GM12878 (cell line): ENCODE measurements at regions of chr6 and their contacts with region 1.

Region 1: GRCh38 chr6:105077596-105078385 is 102.0 kb downstream of the POPDC3 start:
- DNase-seq: no peak
- ATAC-seq: peak; percentile 63
- H3K4me3 ChIP-seq: no peak overlapping the region
- H3K27ac ChIP-seq: no peak overlapping the region
- H3K4me1 ChIP-seq: no peaks in the 10 kb centered on the region
- H3K27me3 ChIP-seq: no peaks in the 10 kb centered on the region
- CTCF ChIP-seq: peak; percentile 38 to 50 (median 42); a peak in 4 of 6 replicates
- EP300 ChIP-seq: no peak
- POLR2A ChIP-seq: no peak
- RAD21 ChIP-seq: peak; percentile 70

Region 2: GRCh38 chr6:104682722-104683643 is 394.8 kb before region 1 on chr6:
- CTCF ChIA-PET with region 1: interaction called, 18 read pairs
- POLR2A ChIA-PET with region 1: no interaction called
- RAD21 ChIA-PET with region 1: interaction called, 8 read pairs
- SMC1A ChIA-PET with region 1: no interaction called
- in situ Hi-C with region 1: no loop called
- intact Hi-C with region 1: loop called (anchors 5 kb)
- DNase-seq: no peak
- ATAC-seq: peak; percentile 93
- H3K4me3 ChIP-seq: no peak overlapping the region
- H3K27ac ChIP-seq: no peak overlapping the region
- H3K4me1 ChIP-seq: no peaks in the 10 kb centered on the region
- H3K27me3 ChIP-seq: no peaks in the 10 kb centered on the region
- CTCF ChIP-seq: peak; percentile 75 to 88 (median 77)
- EP300 ChIP-seq: no peak
- POLR2A ChIP-seq: no peak
- RAD21 ChIP-seq: peak; percentile 78

Region 3: DNA sequence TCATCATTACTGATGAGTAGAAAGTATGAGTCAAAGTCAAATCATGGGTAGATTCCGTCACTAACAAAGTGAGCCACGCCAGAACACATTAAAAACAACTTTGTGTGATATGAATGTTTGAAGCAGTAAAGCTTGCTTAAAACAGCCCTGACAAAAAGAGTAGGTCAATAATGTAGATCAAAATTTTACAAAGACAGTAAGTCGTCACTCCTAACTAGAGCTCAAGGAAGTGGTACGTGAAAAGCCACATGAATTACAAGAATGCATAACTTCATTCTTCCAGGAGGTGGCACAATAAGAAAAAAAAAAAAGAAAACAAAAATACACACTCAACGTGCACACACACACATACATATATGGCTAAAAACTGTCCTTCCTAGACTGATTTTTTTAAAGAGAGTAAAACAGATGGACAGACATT is 288.0 kb before region 1 on chr6:
- CTCF ChIA-PET with region 1: interaction called, 101 read pairs
- POLR2A ChIA-PET with region 1: interaction called, 3 read pairs
- RAD21 ChIA-PET with region 1: interaction called, 54 read pairs
- SMC1A ChIA-PET with region 1: interaction called, 41 read pairs
- in situ Hi-C with region 1: loop called (anchors 5 kb)
- intact Hi-C with region 1: loop called (anchors 2 kb)
- DNase-seq: no peak
- ATAC-seq: peak; percentile 90
- H3K4me3 ChIP-seq: no peak overlapping the region
- H3K27ac ChIP-seq: no peak overlapping the region
- H3K4me1 ChIP-seq: peaks cover 3% of the 10 kb centered on the region; the same call in 1 of the 2 replicates
- H3K27me3 ChIP-seq: no peaks in the 10 kb centered on the region
- CTCF ChIP-seq: peak; percentile 30 to 46 (median 41); a peak in 4 of 6 replicates
- EP300 ChIP-seq: no peak
- POLR2A ChIP-seq: no peak
- RAD21 ChIP-seq: peak; percentile 34; the same call in 1 of the 2 replicates

Region 4: DNA sequence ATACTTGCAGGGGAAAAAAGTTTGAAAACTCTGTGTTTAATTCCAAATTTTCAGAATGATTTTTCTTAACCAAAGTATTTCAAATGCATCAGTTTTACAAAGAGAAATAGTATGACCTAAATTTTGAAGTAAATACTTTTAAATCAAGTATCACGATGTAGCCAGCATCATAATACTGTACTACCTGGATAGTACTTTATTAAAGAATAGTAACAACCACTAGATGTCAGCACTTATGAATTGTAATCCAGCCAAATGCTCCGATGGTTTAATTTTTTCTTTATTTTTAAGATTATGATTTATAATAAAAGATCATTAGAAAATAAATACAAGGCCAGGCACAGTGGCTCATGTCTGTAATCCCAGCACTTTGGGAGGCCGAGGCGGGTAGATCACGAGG is 180.9 kb before region 1 on chr6:
- CTCF ChIA-PET with region 1: interaction called, 18 read pairs
- POLR2A ChIA-PET with region 1: no interaction called
- RAD21 ChIA-PET with region 1: interaction called, 5 read pairs
- SMC1A ChIA-PET with region 1: interaction called, 13 read pairs
- in situ Hi-C with region 1: no loop called
- intact Hi-C with region 1: loop called (anchors 10 kb)
- DNase-seq: no peak
- ATAC-seq: no peak
- H3K4me3 ChIP-seq: no peak overlapping the region
- H3K27ac ChIP-seq: no peak overlapping the region
- H3K4me1 ChIP-seq: no peaks in the 10 kb centered on the region
- H3K27me3 ChIP-seq: no peaks in the 10 kb centered on the region
- CTCF ChIP-seq: peak in 1 of 3 experiments; percentile 8; a peak in 1 of 6 replicates
- EP300 ChIP-seq: no peak
- POLR2A ChIP-seq: no peak
- RAD21 ChIP-seq: no peak

Region 5: DNA sequence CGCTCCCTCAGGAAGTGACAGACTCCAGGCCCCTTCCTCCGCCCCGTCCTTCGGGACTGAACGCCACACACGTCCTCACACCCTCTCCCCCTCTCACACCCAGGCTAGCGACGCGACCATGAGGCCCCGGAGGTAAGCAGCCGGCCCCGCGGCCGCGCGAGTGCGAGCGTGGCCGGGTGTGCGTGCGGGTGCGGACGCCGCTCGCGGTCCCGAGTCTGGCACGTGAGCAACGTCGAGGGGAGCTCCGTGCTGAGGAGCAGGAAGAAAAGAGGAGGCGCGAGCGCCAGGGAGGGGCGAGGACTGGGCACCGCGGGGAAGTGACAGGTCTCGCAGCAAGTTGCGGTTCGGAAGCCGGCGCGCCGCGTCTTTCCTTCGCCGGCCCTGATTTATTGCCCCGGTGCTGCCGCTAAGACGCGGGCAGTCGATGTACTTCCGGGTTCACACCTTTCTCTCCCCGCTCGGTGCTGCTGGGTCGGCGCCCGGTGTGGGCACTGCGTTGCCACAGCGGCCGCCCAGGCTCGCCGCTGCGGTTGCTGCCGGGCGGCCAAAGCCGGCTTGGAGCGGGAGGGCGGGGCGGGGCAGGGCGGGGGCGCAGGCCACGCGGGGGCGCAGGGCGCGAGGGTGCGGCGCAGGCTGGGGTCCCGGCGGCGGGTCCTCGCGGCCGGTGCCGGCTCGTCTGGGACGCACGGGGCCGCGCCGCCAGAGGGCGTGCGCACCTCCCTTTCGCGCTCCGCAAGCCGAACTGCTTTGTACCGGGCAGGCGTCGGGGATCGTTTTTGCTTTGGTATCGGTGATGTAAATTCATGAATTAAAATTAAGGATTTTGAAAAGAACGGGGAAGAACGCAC is 136.7 kb before region 1 on chr6:
- CTCF ChIA-PET with region 1: interaction called, 4 read pairs
- POLR2A ChIA-PET with region 1: no interaction called
- RAD21 ChIA-PET with region 1: interaction called, 3 read pairs
- SMC1A ChIA-PET with region 1: no interaction called
- in situ Hi-C with region 1: no loop called
- intact Hi-C with region 1: loop called (anchors 5 kb)
- DNase-seq: no peak
- ATAC-seq: peak; percentile 82
- H3K4me3 ChIP-seq: no peak overlapping the region
- H3K27ac ChIP-seq: no peak overlapping the region
- H3K4me1 ChIP-seq: no peaks in the 10 kb centered on the region
- H3K27me3 ChIP-seq: peaks cover 0 to 7% of the 10 kb centered on the region in 2 experiments; a peak in 1 of 4 replicates
- CTCF ChIP-seq: peak; percentile 24 to 38 (median 38); a peak in 5 of 6 replicates
- EP300 ChIP-seq: no peak
- POLR2A ChIP-seq: no peak
- RAD21 ChIP-seq: no peak

Region 6: DNA sequence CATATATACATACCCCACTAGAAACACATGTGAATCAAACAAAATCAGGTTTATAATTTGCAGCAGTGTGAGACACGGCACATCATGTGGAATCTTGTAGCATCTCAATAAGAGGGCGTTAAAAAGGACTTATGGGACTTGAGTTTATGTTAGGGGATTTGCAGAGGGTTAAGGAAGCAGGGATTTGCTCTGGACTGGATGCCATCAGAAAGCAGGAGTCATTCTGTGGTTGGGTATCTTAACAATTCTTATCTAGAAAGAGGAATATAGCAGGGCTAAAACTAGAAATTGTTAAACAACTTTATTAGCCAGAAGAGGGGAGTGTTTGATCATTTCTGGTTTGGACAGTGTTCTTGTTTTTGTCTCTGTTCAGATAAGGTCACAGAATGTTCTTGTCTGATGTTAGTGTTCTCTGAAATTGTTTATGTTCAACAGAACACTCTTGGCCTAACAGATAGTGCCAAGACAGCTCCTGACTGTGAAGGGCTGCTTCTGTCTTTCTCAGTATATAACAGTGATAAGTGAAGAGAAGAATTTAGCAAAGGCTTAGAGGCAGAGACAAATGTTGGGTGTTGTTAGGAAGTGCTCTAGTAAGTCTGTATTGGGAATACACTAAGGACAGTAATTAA is 81.7 kb before region 1 on chr6:
- CTCF ChIA-PET with region 1: interaction called, 23 read pairs
- POLR2A ChIA-PET with region 1: no interaction called
- RAD21 ChIA-PET with region 1: interaction called, 8 read pairs
- SMC1A ChIA-PET with region 1: interaction called, 15 read pairs
- in situ Hi-C with region 1: no loop called
- intact Hi-C with region 1: no loop called
- DNase-seq: no peak
- ATAC-seq: peak; percentile 14; the same call in 2 of the 3 replicates
- H3K4me3 ChIP-seq: no peak overlapping the region
- H3K27ac ChIP-seq: no peak overlapping the region
- H3K4me1 ChIP-seq: no peaks in the 10 kb centered on the region
- H3K27me3 ChIP-seq: no peaks in the 10 kb centered on the region
- CTCF ChIP-seq: peak in 1 of 3 experiments; percentile 6; a peak in 1 of 6 replicates
- EP300 ChIP-seq: no peak
- POLR2A ChIP-seq: no peak
- RAD21 ChIP-seq: no peak

Region 7: DNA sequence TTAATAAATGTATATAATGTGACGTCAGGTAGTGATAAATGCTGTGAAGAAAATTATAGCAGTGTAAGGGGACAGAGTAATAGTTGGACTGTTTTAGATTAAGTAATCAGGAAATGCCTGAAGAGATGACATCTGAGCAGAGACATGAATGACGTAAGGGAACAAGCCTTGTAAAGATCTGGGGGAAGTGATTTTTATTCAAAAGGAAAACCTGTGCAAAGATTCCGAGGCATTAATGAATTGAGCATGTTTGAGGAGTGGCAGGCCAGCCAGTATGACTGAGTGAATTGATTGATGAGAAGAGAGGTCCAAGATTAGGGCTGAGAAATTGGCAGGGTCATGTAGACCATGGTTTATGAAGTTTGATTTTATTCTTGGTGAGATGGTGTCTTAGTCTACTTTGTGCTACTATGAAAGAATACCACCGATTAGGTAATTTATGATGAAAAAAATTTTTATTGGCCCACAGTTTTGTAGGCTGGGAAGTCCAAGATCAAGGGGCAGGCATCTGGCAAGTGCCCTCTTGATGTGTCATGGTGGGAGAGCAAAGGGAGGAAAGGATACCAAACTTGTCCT is 25.8 kb before region 1 on chr6:
- CTCF ChIA-PET with region 1: no interaction called
- POLR2A ChIA-PET with region 1: no interaction called
- RAD21 ChIA-PET with region 1: no interaction called
- SMC1A ChIA-PET with region 1: no interaction called
- in situ Hi-C with region 1: no loop called
- intact Hi-C with region 1: no loop called
- DNase-seq: no peak
- ATAC-seq: no peak
- H3K4me3 ChIP-seq: no peak overlapping the region
- H3K27ac ChIP-seq: no peak overlapping the region
- H3K4me1 ChIP-seq: no peaks in the 10 kb centered on the region
- H3K27me3 ChIP-seq: no peaks in the 10 kb centered on the region
- CTCF ChIP-seq: no peak
- EP300 ChIP-seq: no peak
- POLR2A ChIP-seq: no peak
- RAD21 ChIP-seq: no peak

Region 8: GRCh38 chr6:106979427-106979884 is 1901.7 kb after region 1 on chr6:
- CTCF ChIA-PET with region 1: no interaction called
- POLR2A ChIA-PET with region 1: no interaction called
- RAD21 ChIA-PET with region 1: no interaction called
- SMC1A ChIA-PET with region 1: no interaction called
- in situ Hi-C with region 1: no loop called
- intact Hi-C with region 1: no loop called
- DNase-seq: peak; percentile 24
- ATAC-seq: peak; percentile 84
- H3K4me3 ChIP-seq: no peak overlapping the region
- H3K27ac ChIP-seq: no peak overlapping the region
- H3K4me1 ChIP-seq: no peaks in the 10 kb centered on the region
- H3K27me3 ChIP-seq: no peaks in the 10 kb centered on the region; a peak in 1 of 4 replicates
- CTCF ChIP-seq: peak; percentile 93 to 95 (median 95)
- EP300 ChIP-seq: no peak
- POLR2A ChIP-seq: no peak
- RAD21 ChIP-seq: peak; percentile 99